ENCODE measurements at regions of chr17 and their contacts with region 1.

Region 1: DNA sequence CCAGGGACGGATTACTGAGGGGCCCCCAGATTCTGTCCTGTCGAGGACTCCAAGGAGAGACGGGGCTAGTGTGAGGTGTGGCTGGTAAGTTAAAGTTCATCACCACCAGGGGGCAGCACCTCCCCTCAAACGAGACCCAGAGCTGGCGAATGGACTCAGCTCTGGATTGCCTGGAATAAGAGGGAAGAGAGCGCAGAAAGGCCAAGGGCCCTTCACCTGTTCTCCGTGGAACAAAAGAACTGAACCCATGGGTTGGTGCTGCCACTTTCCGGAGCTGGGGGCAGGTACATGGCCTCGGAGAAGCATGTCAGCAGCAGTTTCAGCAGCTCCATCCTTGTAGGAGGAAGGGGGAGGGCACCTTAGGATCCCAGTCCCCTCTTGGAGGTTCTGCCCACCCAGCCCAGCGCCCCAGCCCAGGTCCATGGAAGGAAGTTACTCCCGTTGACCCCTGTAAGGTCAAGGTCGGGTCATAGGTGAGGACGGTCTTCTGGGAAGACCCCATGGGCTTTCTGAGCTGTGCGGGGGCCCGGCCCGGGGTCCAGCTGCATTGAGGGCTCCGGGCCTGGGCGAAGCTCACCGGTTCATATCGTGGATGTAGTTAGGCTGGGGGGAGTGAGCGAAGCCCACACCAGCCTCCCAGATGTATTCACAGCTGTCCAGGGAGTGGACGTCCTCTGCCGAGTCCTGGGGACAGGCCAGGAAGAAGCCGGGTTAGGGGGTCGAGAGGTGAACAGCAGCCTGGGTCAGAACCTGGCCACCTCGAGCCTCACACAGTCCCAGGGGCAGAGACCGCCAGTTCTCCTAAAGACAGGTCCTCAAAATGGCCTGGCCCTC is 10.7 kb downstream of the HID1 start:
- DNase-seq: peak; percentile 89
- ATAC-seq: peak; percentile 78
- H3K4me3 Mint-ChIP-seq: no peak overlapping the region
- H3K27ac Mint-ChIP-seq: no peak overlapping the region
- H3K4me1 Mint-ChIP-seq: peaks cover 10% of the 10 kb centered on the region
- H3K27me3 Mint-ChIP-seq: peaks cover 2% of the 10 kb centered on the region

Region 2: GRCh38 chr17:74697515-74697914 is 264.4 kb before region 1 on chr17:
- CTCF ChIA-PET with region 1: no interaction called
- POLR2A ChIA-PET with region 1: no interaction called
- DNase-seq: no peak
- ATAC-seq: no peak
- H3K4me3 Mint-ChIP-seq: no peak overlapping the region
- H3K27ac Mint-ChIP-seq: no peak overlapping the region
- H3K4me1 Mint-ChIP-seq: no peaks in the 10 kb centered on the region
- H3K27me3 Mint-ChIP-seq: peaks cover 26% of the 10 kb centered on the region

Region 3: DNA sequence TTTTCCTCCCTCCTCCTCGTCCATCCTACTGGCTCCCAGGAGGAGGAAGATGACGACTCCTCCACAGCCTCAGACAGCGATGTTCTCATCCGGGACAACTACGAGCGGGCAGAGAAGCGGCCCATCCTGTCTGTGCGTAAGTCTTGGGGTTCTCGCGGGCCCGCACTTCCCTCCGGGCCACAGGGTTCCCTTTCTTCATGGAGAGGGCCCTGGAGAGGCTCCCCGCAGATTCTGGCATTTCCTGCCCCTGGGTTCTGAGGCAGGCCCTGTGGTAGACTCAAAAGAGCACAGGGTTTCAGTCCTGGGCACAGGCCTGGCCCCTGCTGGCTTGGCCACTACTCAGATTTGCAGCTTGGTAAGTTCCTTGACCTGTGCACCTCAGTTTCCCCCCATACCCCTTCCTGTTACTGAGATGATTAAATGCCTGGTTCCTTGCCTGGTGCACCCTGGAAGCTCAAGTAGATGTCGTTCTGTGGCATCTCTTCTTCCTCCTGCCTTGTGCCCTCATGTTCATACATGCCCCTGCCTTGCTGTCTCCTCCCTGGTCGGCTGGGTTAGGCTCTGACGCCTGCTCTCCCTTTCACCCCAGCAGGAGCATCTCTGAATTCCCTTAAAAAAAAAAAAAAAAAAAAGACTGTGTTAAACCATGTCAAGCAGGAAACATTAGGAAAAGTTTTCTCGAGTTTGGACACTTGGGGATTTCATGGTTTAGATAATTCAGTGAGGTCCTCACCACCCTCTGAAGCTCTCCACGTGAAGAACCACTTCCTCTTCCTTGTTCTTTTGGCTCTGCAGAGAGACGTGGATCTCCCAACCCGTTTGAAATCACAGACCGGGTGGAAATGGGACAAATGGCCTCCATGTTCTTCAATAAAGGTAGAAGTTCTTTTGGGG is 171.5 kb before region 1 on chr17:
- CTCF ChIA-PET with region 1: interaction called, 23 read pairs
- POLR2A ChIA-PET with region 1: no interaction called
- DNase-seq: no peak
- ATAC-seq: peak; percentile 19
- H3K4me3 Mint-ChIP-seq: peak overlapping the region; percentile 39
- H3K27ac Mint-ChIP-seq: peak overlapping the region; percentile 68
- H3K4me1 Mint-ChIP-seq: peaks cover 47% of the 10 kb centered on the region
- H3K27me3 Mint-ChIP-seq: no peaks in the 10 kb centered on the region

Region 4: DNA sequence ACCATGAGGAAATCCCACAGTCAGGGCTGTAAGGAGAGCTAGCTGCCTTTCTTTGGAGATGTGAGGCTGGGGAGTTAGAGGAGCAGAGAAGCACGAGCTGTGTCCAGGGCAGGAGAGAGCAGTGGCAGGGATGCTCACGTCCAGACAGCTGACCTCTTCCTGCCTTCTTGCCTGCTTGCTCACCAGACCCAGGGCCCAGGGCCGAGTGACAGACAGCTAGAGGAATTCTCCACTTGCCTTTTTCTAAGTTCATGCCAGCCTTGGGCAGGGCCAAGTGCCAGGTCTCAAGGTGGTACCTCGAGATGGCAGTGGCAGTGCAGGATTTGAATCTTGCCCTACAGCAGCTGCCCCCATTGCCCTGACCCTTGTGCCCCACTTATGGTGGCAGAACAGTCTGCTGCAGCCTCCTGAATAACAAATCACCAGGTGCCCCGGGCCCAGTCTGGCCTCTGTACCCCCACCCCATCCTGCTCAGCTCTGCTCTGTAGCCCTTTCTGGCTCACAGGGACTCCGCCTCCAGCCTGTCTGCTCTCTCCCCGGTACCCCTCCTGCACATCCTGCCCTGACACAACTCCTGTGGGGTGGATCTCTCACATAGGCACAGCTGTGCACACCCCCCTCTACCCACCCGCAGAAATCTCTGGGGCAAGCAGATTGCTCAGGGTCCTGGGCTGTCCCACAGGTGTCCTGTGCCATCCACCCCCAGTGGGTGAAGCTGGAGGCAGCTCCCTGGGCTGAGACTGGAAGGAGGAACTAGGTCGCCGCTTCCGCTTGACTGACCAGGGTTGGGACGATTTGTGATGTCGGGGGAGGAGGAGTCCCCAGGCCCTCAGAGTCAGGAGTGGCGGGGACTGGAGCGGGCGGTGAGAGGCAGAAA is 128.1 kb before region 1 on chr17:
- CTCF ChIA-PET with region 1: no interaction called
- POLR2A ChIA-PET with region 1: no interaction called
- DNase-seq: no peak
- ATAC-seq: no peak
- H3K4me3 Mint-ChIP-seq: no peak overlapping the region
- H3K27ac Mint-ChIP-seq: no peak overlapping the region
- H3K4me1 Mint-ChIP-seq: no peaks in the 10 kb centered on the region
- H3K27me3 Mint-ChIP-seq: no peaks in the 10 kb centered on the region

Region 5: GRCh38 chr17:74950207-74950606 is 11.7 kb before region 1 on chr17:
- CTCF ChIA-PET with region 1: interaction called, 31 read pairs
- POLR2A ChIA-PET with region 1: no interaction called
- DNase-seq: no peak
- ATAC-seq: peak; percentile 20
- H3K4me3 Mint-ChIP-seq: no peak overlapping the region
- H3K27ac Mint-ChIP-seq: no peak overlapping the region
- H3K4me1 Mint-ChIP-seq: no peaks in the 10 kb centered on the region
- H3K27me3 Mint-ChIP-seq: peaks cover under 1% of the 10 kb centered on the region

Region 6: GRCh38 chr17:74987418-74987908 is 25.6 kb after region 1 on chr17 and contains the start of gene CDR2L:
- CTCF ChIA-PET with region 1: interaction called, 25 read pairs
- POLR2A ChIA-PET with region 1: no interaction called
- DNase-seq: peak; percentile 92
- ATAC-seq: peak; percentile 98
- H3K4me3 Mint-ChIP-seq: peak within 1 kb of the TSS; percentile 74
- H3K27ac Mint-ChIP-seq: no peak within 1 kb of the TSS
- H3K4me1 Mint-ChIP-seq: peaks cover 15% of the 10 kb centered on the region
- H3K27me3 Mint-ChIP-seq: peaks cover 48% of the 10 kb centered on the region
- total RNA-seq, gene CDR2L: 0.13 to 0.18 TPM

Region 7: DNA sequence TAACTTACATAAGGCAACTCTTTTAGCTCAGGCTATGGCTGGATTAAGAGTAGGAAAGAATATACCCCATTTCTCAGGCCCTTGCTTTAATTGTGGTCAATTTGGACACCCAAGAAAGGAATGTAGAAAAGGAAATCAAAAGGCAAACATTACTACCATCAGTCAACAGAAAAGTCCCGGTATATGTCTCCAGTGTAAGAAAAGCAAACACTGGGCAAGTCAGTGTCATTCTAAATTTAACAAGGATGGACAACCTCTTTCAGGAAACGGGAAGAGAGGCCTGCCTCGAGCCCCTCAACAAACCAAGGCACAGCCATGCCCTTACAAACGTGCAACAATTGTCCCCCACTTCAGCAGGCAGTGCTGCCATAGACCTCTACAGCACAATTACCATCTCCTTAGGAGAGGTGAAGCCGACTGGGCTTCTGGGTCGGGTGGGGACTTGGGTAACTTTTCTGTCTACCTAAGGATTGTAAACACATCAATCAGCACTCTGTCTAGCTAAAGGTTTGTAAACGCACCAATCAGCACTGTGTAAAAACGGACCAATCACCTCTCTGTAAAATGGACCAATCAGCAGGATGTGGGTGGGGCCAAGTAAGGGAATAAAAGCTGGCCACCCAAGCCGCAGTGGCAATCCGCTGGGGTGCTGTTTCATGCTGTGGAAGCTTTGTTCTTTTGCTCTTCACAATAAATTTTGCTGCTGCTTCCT is 63.0 kb after region 1 on chr17:
- CTCF ChIA-PET with region 1: interaction called, 17 read pairs
- POLR2A ChIA-PET with region 1: no interaction called
- DNase-seq: peak; percentile 58
- ATAC-seq: peak; percentile 53
- H3K4me3 Mint-ChIP-seq: peak overlapping the region; percentile 27
- H3K27ac Mint-ChIP-seq: peak overlapping the region; percentile 44
- H3K4me1 Mint-ChIP-seq: peaks cover 21% of the 10 kb centered on the region
- H3K27me3 Mint-ChIP-seq: peaks cover 8% of the 10 kb centered on the region

Region 8: GRCh38 chr17:75131280-75132017 is 169.6 kb after region 1 on chr17 and contains the start of gene NT5C:
- CTCF ChIA-PET with region 1: interaction called, 29 read pairs
- POLR2A ChIA-PET with region 1: no interaction called
- DNase-seq: peak; percentile 77
- ATAC-seq: peak; percentile 78
- H3K4me3 Mint-ChIP-seq: peak within 1 kb of the TSS; percentile 87
- H3K27ac Mint-ChIP-seq: peak within 1 kb of the TSS; percentile 88
- H3K4me1 Mint-ChIP-seq: peaks cover 27% of the 10 kb centered on the region
- H3K27me3 Mint-ChIP-seq: no peaks in the 10 kb centered on the region
- total RNA-seq, gene NT5C: 68.5 to 68.8 TPM

Measured in activated CD8-positive, alpha-beta T cell treated with anti-CD3 and anti-CD28 coated beads, Interleukin-2, amount 10 ng/mL, durations not matched to agents 7 days and 5 days (primary cell).